IMR-90 (cell line): ENCODE measurements at regions of chr16 and their contacts with region 1.

Region 1: GRCh38 chr16:46830902-46831647 is at the start of gene C16orf87:
- DNase-seq: peak; percentile 92
- ATAC-seq: peak; percentile 95
- H3K4me3 ChIP-seq: peak within 1 kb of the TSS; percentile 98
- H3K27ac ChIP-seq: peak within 1 kb of the TSS; percentile 94
- H3K4me1 ChIP-seq: peaks cover 4% of the 10 kb centered on the region; the same call in 1 of the 2 replicates
- H3K27me3 ChIP-seq: no peaks in the 10 kb centered on the region
- CTCF ChIP-seq: no peak
- POLR2A ChIP-seq: peak; percentile 61
- RAD21 ChIP-seq: no peak
- total RNA-seq, gene C16orf87: 6.3 and 16.4 TPM in 2 replicates

Region 2: GRCh38 chr16:46706642-46707041 is 124.4 kb before region 1 on chr16:
- CTCF ChIA-PET with region 1: no interaction called
- POLR2A ChIA-PET with region 1: interaction called, 14 read pairs
- dilution Hi-C with region 1: no loop called
- in situ Hi-C with region 1: no loop called
- intact Hi-C with region 1: no loop called
- DNase-seq: no peak
- ATAC-seq: no peak
- H3K4me3 ChIP-seq: no peak overlapping the region
- H3K27ac ChIP-seq: no peak overlapping the region
- H3K4me1 ChIP-seq: no peaks in the 10 kb centered on the region
- H3K27me3 ChIP-seq: no peaks in the 10 kb centered on the region
- CTCF ChIP-seq: no peak
- POLR2A ChIP-seq: no peak
- RAD21 ChIP-seq: no peak

Region 3: GRCh38 chr16:46731691-46732555 is 99.2 kb before region 1 on chr16:
- CTCF ChIA-PET with region 1: no interaction called
- POLR2A ChIA-PET with region 1: no interaction called
- dilution Hi-C with region 1: no loop called
- in situ Hi-C with region 1: no loop called
- intact Hi-C with region 1: no loop called
- DNase-seq: no peak
- ATAC-seq: no peak
- H3K4me3 ChIP-seq: no peak overlapping the region
- H3K27ac ChIP-seq: no peak overlapping the region
- H3K4me1 ChIP-seq: peaks cover 2% of the 10 kb centered on the region; the same call in 1 of the 2 replicates
- H3K27me3 ChIP-seq: no peaks in the 10 kb centered on the region
- CTCF ChIP-seq: no peak
- POLR2A ChIP-seq: no peak
- RAD21 ChIP-seq: no peak

Region 4: DNA sequence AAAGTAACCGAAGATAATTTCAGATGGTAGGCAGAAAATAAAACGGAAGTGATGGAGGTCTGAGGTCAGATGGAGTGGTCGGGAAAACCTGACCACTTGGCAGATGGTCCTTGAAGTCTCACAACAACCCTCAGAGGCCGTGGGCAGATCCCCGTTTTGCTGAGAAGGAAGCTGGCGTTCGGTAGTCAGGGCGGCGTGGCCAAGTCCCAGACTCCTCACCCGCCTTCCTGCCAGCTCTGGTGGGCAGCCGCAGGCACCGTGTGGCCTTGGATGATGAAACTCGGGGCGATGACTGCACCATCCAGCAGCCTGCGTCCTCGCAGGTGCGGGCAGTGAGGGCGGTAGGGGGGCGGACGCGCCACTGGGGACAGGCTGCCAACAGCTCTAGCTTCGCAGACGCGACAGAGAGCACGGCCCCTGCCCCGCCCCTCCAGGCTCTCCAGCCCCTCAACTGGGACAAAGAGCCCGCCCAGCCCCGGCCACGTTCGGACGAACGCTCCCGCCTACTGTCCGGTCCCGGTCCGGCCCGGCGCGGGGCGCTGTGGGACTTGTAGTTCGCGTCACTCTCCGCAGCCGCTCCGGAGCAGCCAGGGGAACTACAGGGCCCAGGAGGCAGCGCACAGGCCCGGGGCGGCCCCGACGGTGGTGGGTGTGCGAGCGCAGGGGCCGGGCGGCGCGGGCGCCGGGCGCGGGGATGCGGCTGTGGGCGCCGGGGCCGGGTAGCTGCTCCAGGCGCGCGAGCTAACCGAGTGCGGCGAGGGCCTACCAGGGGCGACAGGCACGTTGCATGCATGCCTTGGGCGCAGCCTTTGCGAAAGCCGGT is 52.8 kb after region 1 on chr16 and contains the start of gene GPT2:
- CTCF ChIA-PET with region 1: no interaction called
- POLR2A ChIA-PET with region 1: interaction called, 14 read pairs
- dilution Hi-C with region 1: no loop called
- in situ Hi-C with region 1: no loop called
- intact Hi-C with region 1: no loop called
- DNase-seq: peak; percentile 95
- ATAC-seq: peak; percentile 98
- H3K4me3 ChIP-seq: peak within 1 kb of the TSS; percentile 79
- H3K27ac ChIP-seq: peak within 1 kb of the TSS; percentile 61
- H3K4me1 ChIP-seq: peaks cover 13% of the 10 kb centered on the region; the same call in 1 of the 2 replicates
- H3K27me3 ChIP-seq: peaks cover 17% of the 10 kb centered on the region
- CTCF ChIP-seq: no peak; the same call in 1 of the 2 replicates
- POLR2A ChIP-seq: peak; percentile 44
- RAD21 ChIP-seq: no peak
- total RNA-seq, gene GPT2: 20.8 and 31.5 TPM in 2 replicates